Heart left ventricle (tissue), 16 donors: ENCODE measurements at regions of chrX and their contacts with region 1.

Region 1: GRCh38 chrX:129823115-129823514 is 20.6 kb downstream of the ZDHHC9 start:
- DNase-seq: peak in 2 of 5 donors; percentile 13 to 30
- ATAC-seq: peak in 2 of 4 donors; percentile 34 to 65
- H3K4me3 ChIP-seq: no peak overlapping the region
- H3K27ac ChIP-seq: no peak overlapping the region
- H3K4me1 ChIP-seq: no peaks in the 10 kb centered on the region
- H3K27me3 ChIP-seq: no peaks in the 10 kb centered on the region
- CTCF ChIP-seq: peak in 11 of 12 donors; percentile 15 to 58 (median 44)
- POLR2A ChIP-seq: no peak

Region 2: DNA sequence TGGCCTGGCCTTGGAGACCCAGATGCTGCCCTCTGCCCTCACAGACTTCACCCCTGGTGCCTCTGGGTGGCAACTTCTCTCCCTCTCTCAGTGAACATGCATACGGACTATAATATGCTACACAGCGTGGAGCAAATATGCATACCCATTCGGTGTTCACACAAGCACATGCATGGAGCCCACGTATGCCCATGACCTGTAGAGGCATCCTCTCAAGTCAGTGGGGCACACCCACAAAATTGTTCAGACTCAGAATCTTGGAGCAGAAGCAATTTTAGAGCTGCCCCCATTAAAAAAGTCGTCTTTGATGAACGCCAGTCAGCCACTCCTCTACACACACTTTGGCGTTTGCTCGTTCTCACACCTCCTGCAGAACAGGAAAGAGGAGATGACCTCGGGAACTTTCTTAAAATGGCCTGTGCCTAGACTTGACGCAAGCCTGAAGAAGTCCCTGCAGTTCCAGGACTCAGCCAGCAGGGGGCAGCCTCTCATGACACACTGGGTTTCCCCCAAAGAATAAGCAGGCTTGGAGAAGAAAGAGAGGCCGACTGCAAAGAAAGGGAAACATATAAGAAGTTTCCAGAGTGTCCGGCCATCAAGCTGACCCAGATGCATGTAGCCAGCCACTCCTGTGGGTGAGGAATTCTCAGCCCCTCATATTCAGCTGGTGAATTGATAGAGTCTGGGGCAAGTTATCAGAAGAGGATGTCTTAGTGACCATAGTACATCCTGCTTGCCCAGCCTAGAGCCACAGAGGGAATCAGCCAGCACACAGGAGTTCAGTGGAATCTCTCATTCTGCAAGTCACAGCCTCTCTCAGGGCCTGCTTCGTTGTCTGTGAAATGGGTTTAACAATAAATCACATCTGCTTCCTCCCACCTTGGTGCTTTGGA is 185.7 kb before region 1 on chrX:
- intact Hi-C with region 1: loop called in 2 of 10 experiments (anchors 10 kb)
- DNase-seq: peak; percentile 50 to 77 (median 61)
- ATAC-seq: peak; percentile 55 to 79 (median 73)
- H3K4me3 ChIP-seq: no peak overlapping the region
- H3K27ac ChIP-seq: no peak overlapping the region
- H3K4me1 ChIP-seq: peaks cover 0 to 7% (median 0%) of the 10 kb centered on the region in 12 donors
- H3K27me3 ChIP-seq: peaks cover 0 to 7% (median 0%) of the 10 kb centered on the region in 9 donors
- CTCF ChIP-seq: peak; percentile 76 to 92 (median 83)
- POLR2A ChIP-seq: no peak

Region 3: DNA sequence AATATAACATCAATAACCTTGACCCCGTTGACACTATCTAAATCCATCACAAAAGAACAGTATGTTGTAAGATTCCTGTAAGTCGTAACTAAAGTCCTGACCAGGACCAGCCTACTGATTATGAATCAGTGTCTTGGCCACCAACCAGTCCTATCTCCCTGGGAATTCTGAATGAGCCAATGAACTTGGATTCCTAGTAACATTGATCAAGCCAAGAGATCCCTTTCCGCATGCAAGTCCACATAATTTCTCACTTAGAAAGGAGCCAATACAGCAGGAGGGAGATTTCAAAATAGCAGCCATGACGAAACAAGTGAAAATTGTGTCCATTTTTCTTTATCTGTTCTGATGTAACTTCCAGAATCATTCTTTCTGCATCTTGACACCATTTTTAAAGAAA is 74.8 kb before region 1 on chrX:
- intact Hi-C with region 1: loop called in 1 of 10 experiments (anchors 10 kb)
- DNase-seq: peak in 1 of 5 donors; percentile 18
- ATAC-seq: peak in 3 of 4 donors; percentile 62 to 85 (median 71)
- H3K4me3 ChIP-seq: no peak overlapping the region
- H3K27ac ChIP-seq: peak overlapping the region in 1 of 12 donors; percentile 17
- H3K4me1 ChIP-seq: no peaks in the 10 kb centered on the region
- H3K27me3 ChIP-seq: no peaks in the 10 kb centered on the region
- CTCF ChIP-seq: no peak
- POLR2A ChIP-seq: no peak

Region 4: DNA sequence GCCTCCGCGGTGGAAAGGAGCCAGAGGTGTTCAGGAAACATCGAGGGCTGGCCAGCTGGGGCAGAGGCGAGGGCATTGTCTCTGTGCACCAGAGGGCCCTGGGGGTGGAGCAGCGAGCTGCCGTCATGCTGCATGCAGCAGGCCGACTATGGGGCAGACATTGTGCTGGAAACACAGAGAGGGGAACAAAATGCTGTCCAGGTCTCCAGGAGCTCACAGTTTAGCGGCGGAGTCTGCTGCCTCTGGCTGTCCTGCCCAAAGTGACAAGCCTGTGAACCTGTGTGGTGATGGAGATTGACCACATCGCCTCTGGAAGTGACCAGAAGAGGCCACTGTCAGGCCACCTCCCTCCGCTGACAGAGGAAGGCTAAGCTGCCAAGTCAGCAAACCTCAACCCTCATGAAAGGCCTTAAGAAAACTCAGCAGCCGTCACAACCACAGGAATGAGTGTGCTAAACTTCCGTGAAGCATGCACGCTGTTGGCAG is 63.5 kb before region 1 on chrX:
- intact Hi-C with region 1: loop called in 2 of 10 experiments (anchors 5 to 10 kb)
- DNase-seq: peak in 3 of 5 donors; percentile 35 to 50 (median 47)
- ATAC-seq: peak in 3 of 4 donors; percentile 64 to 85 (median 67)
- H3K4me3 ChIP-seq: no peak overlapping the region
- H3K27ac ChIP-seq: peak overlapping the region in 2 of 12 donors; percentile 14 to 83
- H3K4me1 ChIP-seq: peaks cover 0 to 41% (median 0%) of the 10 kb centered on the region in 12 donors
- H3K27me3 ChIP-seq: peaks cover 0 to 4% (median 0%) of the 10 kb centered on the region in 9 donors
- CTCF ChIP-seq: peak in 3 of 12 donors; percentile 12 to 40 (median 26)
- POLR2A ChIP-seq: no peak

Region 5: GRCh38 chrX:129793604-129794191 is 29.4 kb before region 1 on chrX:
- intact Hi-C with region 1: no loop called
- DNase-seq: no peak
- ATAC-seq: peak in 1 of 4 donors; percentile 24
- H3K4me3 ChIP-seq: no peak overlapping the region
- H3K27ac ChIP-seq: no peak overlapping the region
- H3K4me1 ChIP-seq: no peaks in the 10 kb centered on the region
- H3K27me3 ChIP-seq: no peaks in the 10 kb centered on the region
- CTCF ChIP-seq: no peak
- POLR2A ChIP-seq: no peak